HEK293 (cell line): ENCODE measurements at regions of chr17 and their contacts with region 1.

Region 1: DNA sequence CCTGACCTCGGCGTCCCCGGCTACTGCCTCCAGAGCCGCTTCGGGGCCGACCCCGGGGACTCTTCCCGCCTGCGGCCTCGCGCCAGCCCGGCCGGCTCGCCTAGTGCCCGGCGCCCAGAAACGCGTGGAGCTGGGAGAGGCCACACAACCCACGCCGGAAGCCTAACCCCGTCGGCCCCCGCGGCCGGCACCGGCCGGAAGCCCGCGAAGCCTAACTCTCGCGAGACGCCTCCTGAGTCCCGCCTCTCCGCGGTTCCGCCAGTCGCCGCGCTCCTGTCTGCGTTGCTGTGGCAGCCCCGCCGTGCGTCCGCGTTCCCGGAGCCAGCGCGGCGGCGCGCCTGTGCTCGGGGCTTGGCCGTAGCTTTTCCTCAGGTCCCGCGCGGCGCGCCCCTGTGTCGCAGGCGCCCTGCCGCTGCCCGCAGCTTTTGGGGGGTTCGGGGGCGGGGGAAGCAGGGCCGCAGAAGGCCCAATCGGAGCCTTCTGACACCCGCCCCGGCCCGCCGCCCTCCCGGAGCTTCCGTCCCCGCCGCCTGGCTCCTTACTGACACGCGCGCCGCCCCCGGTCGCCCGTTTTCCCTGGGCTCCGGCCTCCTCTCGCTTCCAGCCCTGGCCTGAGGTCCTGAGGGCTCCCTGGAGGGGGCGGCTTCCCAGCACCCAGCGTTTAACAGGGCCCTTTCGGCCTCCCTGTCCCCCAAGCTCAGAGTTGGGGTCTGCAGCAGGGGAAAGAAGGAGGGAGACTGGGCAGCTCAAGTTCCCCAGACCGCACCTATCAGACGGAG is 21.7 kb downstream of the NPTX1 start:
- H3K4me3 ChIP-seq: peak overlapping the region; percentile 78
- H3K27ac ChIP-seq: peak overlapping the region; percentile 97
- H3K4me1 ChIP-seq: peaks cover 15% of the 10 kb centered on the region
- CTCF ChIP-seq: 0 out of 2 replicates have a peak, but pooled peaks have one; percentile 15

Region 2: GRCh38 chr17:80441133-80441578 is 13.6 kb before region 1 on chr17:
- CTCF ChIA-PET with region 1: interaction called, 3 read pairs
- POLR2A ChIA-PET with region 1: interaction called, 13 read pairs
- H3K4me3 ChIP-seq: no peak overlapping the region
- H3K27ac ChIP-seq: no peak overlapping the region
- H3K4me1 ChIP-seq: no peaks in the 10 kb centered on the region
- CTCF ChIP-seq: no peak

Region 3: GRCh38 chr17:80465327-80465974 is 10.7 kb after region 1 on chr17:
- CTCF ChIA-PET with region 1: interaction called, 3 read pairs
- POLR2A ChIA-PET with region 1: interaction called, 110 read pairs
- H3K4me3 ChIP-seq: no peak overlapping the region
- H3K27ac ChIP-seq: no peak overlapping the region
- H3K4me1 ChIP-seq: no peaks in the 10 kb centered on the region
- CTCF ChIP-seq: no peak

Region 4: GRCh38 chr17:80477647-80478478 is 23.1 kb after region 1 on chr17:
- CTCF ChIA-PET with region 1: interaction called, 7 read pairs
- POLR2A ChIA-PET with region 1: interaction called, 110 read pairs
- H3K4me3 ChIP-seq: peak overlapping the region; percentile 49
- H3K27ac ChIP-seq: peak overlapping the region; percentile 86; the same call in 1 of the 2 replicates
- H3K4me1 ChIP-seq: peaks cover 7% of the 10 kb centered on the region
- CTCF ChIP-seq: peak; percentile 45; the same call in 1 of the 2 replicates

Region 5: DNA sequence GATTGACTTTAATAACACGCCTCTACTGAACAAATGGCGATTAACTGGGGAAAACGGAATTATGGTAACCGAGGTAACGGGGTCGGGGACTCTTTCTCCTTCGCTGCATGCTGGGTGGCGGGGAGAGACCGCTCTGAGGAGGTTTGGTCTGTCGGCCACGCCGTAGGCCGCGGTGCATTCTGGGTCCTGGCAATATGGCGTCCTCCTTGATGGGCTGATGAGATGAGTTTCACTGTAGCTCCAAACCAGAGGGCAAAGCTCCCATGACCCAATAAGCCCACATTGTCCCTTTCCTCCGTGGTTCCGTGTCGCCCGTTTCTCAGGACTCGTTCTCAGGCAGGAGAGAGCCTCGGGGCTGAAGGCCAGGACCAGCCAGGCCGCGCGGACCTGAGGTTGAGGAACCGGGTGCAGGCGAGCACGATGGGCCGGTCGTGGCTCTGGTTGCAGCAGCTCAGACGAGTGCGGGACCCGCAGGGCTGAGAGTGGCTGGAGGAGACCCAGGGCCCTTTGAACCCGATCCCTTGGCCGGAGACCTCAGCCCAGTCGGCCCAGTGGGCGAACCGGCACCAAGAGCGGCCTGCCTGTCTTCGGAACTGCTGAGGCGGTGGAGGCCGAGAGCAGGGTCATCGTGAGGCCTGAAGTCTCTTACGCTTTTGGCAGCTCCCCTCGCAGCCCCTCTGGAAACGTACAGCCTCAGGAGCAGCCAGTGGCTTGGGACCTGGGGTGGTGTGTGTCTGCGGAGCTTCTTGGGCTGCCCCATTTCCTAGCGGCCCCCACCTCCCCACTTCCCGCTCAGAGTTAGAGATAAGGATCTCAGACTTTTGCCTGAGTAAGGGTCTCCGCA is 90.1 kb after region 1 on chr17 and contains the start of gene RPTOR:
- CTCF ChIA-PET with region 1: no interaction called
- POLR2A ChIA-PET with region 1: interaction called, 11 read pairs
- H3K4me3 ChIP-seq: peak within 1 kb of the TSS; percentile 99
- H3K27ac ChIP-seq: peak within 1 kb of the TSS; percentile 68
- H3K4me1 ChIP-seq: peaks cover 10% of the 10 kb centered on the region
- CTCF ChIP-seq: no peak